ENCODE measurements at regions of chr7 and their contacts with region 1.

Region 1: GRCh38 chr7:82105463-82105862 is 335.6 kb upstream of the HGF start:
- DNase-seq: peak; percentile 80
- ATAC-seq: peak; percentile 82
- H3K4me3 ChIP-seq: no peak overlapping the region
- H3K27ac ChIP-seq: peak overlapping the region; percentile 75
- H3K4me1 ChIP-seq: peaks cover 21% of the 10 kb centered on the region
- H3K27me3 ChIP-seq: no peaks in the 10 kb centered on the region
- CTCF ChIP-seq: no peak

Region 2: DNA sequence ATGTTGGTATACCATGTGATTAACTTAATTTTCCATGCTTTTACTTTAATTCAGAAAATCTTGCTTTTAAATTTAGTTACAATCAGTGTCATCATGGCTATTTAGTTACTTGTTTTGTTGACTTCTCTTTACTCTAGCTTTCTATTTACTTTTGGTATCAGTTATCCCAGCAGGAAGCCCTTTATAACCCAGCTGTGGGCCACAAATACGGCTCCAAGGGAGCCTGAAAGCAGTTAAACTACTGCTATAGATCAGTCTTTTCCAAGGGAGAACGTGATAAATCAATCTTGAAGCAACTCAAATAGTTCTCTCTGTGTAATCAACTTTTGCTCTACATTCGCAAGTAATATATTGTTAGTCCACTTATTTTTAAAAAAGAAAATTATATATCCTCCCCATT is 50.7 kb after region 1 on chr7:
- CTCF ChIA-PET with region 1: no interaction called
- POLR2A ChIA-PET with region 1: interaction called, 3 read pairs
- intact Hi-C with region 1: loop called (anchors 5 kb)
- DNase-seq: no peak
- ATAC-seq: no peak
- H3K4me3 ChIP-seq: no peak overlapping the region
- H3K27ac ChIP-seq: no peak overlapping the region
- H3K4me1 ChIP-seq: no peaks in the 10 kb centered on the region; the same call in 1 of the 2 replicates
- H3K27me3 ChIP-seq: peaks cover 18% of the 10 kb centered on the region; the same call in 1 of the 2 replicates
- CTCF ChIP-seq: no peak

Measured in PC-3 (cell line).